ENCODE measurements at regions of chr3 and their contacts with region 1.

Region 1: DNA sequence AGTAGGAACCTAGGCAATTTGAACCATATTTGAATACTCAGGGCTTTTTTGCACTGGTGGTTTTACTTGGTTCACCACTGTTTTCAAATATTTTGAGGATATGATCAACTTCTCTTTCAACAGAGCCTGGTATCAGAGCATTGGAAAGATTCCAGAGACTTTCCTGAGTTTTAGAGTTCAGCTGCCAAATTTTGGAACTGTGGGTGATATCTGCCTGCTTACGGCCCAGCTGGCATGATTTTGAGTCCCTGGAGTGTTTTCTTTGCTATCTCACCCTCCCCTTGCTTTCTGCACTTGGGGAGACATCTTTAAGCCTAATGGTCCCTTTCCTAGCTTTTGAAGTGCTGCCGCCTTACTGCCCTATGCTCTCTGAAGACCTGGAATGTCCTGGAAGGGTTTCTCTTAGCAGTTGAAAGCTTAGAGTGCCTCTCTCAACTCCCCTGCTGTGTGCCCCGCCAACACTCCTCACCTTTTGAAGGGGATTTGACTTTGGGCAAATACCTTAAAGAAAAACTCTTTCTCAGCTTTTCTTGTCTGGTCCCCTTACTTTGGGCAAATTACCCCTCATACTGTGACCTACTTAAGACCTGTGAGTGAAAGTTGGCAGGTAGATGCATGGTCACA is 539.1 kb downstream of the MFSD1 start:
- DNase-seq: no peak
- ATAC-seq: no peak
- H3K4me3 ChIP-seq: no peak overlapping the region
- H3K27ac ChIP-seq: no peak overlapping the region
- H3K4me1 ChIP-seq: no peaks in the 10 kb centered on the region
- H3K27me3 ChIP-seq: no peaks in the 10 kb centered on the region
- CTCF ChIP-seq: no peak
- POLR2A ChIP-seq: no peak

Region 2: DNA sequence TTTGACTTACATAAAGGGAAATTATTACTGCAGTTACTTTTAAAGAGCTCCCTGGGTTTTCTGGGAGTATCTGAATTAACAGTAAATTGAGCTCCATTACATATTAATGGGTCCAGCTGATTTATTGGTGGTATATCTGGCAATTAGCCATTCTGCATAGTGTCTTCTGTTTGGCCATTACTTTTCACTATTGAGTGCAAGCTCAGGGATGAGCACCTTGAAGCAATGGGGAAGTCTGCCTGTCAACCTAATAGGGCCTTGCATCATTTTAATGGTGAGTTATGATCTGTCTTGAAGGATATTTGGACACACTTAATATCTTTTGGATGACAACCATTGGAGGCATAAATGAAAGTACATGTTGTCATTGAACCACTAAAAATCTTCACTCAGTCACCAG is 465.3 kb before region 1 on chr3:
- in situ Hi-C with region 1: no loop called
- intact Hi-C with region 1: no loop called
- DNase-seq: no peak
- ATAC-seq: no peak
- H3K4me3 ChIP-seq: no peak overlapping the region
- H3K27ac ChIP-seq: no peak overlapping the region
- H3K4me1 ChIP-seq: no peaks in the 10 kb centered on the region
- H3K27me3 ChIP-seq: no peaks in the 10 kb centered on the region
- CTCF ChIP-seq: no peak
- POLR2A ChIP-seq: no peak

Region 3: DNA sequence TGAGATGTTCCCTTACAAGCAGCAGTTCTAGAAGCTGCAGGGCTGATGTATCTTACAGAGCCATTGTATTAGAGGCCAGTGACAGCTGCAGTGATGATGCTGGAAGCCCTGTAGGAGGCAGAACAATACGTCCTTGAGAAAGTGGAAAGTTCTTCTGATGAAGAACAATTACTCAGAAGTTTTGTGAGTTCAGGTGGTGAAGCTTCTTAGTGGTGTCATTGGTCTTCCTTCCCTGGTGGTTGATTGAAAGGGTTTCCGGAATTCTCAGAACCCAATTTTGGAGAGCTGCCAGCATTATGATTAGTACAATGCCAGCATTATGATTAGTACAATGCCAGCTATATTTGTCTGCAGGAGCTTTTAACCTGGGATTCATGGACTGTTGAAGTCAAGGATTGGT is 182.8 kb before region 1 on chr3:
- in situ Hi-C with region 1: no loop called
- intact Hi-C with region 1: no loop called
- DNase-seq: no peak
- ATAC-seq: no peak
- H3K4me3 ChIP-seq: no peak overlapping the region
- H3K27ac ChIP-seq: no peak overlapping the region
- H3K4me1 ChIP-seq: no peaks in the 10 kb centered on the region
- H3K27me3 ChIP-seq: no peaks in the 10 kb centered on the region
- CTCF ChIP-seq: no peak
- POLR2A ChIP-seq: no peak

Region 4: GRCh38 chr3:159432682-159433340 is 91.8 kb after region 1 on chr3:
- in situ Hi-C with region 1: loop called in 1 of 4 experiments (anchors 25 kb)
- intact Hi-C with region 1: no loop called
- DNase-seq: no peak
- ATAC-seq: no peak
- H3K4me3 ChIP-seq: no peak overlapping the region
- H3K27ac ChIP-seq: no peak overlapping the region
- H3K4me1 ChIP-seq: no peaks in the 10 kb centered on the region
- H3K27me3 ChIP-seq: no peaks in the 10 kb centered on the region
- CTCF ChIP-seq: no peak
- POLR2A ChIP-seq: no peak

Measured in gastrocnemius medialis (tissue), 4 donors.